Transverse colon (tissue), 4 donors: ENCODE measurements at regions of chr4 and their contacts with region 1.

Region 1: DNA sequence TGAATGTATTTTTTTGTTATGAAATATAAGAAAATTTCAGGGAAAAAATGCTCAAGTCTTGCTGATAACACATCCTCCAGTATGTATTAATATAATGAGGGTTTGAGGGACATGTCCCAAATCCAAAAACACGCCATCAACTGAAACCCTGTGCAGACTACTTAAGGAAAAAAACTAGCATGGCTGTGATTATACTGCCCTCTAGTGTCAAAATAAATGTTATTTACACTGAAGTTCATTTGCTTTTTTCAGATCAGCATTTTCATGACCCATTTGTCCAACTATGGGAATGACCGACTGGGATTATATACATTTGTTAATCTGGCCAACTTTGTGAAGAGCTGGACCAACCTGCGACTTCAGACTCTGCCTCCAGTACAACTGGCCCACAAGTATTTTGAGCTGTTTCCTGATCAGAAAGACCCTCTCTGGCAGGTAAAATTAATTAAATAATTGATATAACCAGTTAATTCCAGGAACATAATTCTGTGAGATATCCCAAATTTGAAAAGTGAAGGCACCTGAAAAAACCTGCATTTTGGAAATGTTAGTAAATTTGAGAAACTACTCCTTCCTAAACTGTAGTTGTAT is 128.5 kb downstream of the PRSS12 start:
- DNase-seq: no peak
- H3K4me3 ChIP-seq: no peak overlapping the region
- H3K27ac ChIP-seq: no peak overlapping the region
- H3K4me1 ChIP-seq: peaks cover 0 to 17% (median 3%) of the 10 kb centered on the region in 4 donors
- H3K27me3 ChIP-seq: no peaks in the 10 kb centered on the region
- CTCF ChIP-seq: peak; percentile 39 to 71 (median 66)
- EP300 ChIP-seq: no peak
- POLR2A ChIP-seq: no peak

Region 2: GRCh38 chr4:116358588-116359222 is 1865.6 kb before region 1 on chr4:
- in situ Hi-C with region 1: loop called in 1 of 4 experiments (anchors 25 kb)
- intact Hi-C with region 1: no loop called
- DNase-seq: peak; percentile 66
- H3K4me3 ChIP-seq: no peak overlapping the region
- H3K27ac ChIP-seq: no peak overlapping the region
- H3K4me1 ChIP-seq: no peaks in the 10 kb centered on the region
- H3K27me3 ChIP-seq: no peaks in the 10 kb centered on the region
- CTCF ChIP-seq: peak; percentile 46 to 61 (median 52)
- EP300 ChIP-seq: no peak
- POLR2A ChIP-seq: no peak